Activated naive CD4-positive, alpha-beta T cell treated with anti-CD3 and anti-CD28 coated beads for 36 hours (primary cell): ENCODE measurements at regions of chr11 and their contacts with region 1.

Region 1: GRCh38 chr11:125358254-125358840 is 137.7 kb downstream of the FEZ1 start:
- DNase-seq: no peak
- H3K4me3 Mint-ChIP-seq: no peak overlapping the region
- H3K27ac Mint-ChIP-seq: no peak overlapping the region
- H3K4me1 Mint-ChIP-seq: no peaks in the 10 kb centered on the region
- H3K27me3 Mint-ChIP-seq: no peaks in the 10 kb centered on the region

Region 2: GRCh38 chr11:124644426-124645280 is 713.7 kb before region 1 on chr11:
- CTCF ChIA-PET with region 1: no interaction called
- intact Hi-C with region 1: loop called (anchors 5 kb)
- DNase-seq: peak; percentile 26
- H3K4me3 Mint-ChIP-seq: no peak overlapping the region
- H3K27ac Mint-ChIP-seq: no peak overlapping the region
- H3K4me1 Mint-ChIP-seq: no peaks in the 10 kb centered on the region
- H3K27me3 Mint-ChIP-seq: no peaks in the 10 kb centered on the region

Region 3: DNA sequence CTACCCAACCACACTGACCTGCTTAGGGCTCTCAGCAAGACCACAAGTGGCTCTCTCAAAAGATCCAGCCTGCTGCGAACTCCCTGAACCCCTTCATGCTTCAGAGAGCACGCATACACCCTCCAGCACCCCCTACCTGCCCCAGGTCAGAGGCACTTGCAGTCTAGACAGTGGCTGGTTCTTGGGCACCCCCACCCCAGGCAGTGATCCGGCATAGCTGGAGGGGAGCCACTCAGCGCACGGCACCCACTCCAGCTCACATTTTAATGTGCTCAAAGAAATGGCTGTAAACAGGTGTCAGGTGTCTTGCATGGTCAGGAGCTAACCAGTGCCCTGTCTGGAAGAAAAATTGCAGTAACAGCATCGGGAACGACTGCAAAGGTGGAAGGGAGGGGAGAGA is 53.0 kb before region 1 on chr11:
- CTCF ChIA-PET with region 1: no interaction called
- intact Hi-C with region 1: no loop called
- DNase-seq: no peak
- H3K4me3 Mint-ChIP-seq: no peak overlapping the region
- H3K27ac Mint-ChIP-seq: no peak overlapping the region
- H3K4me1 Mint-ChIP-seq: no peaks in the 10 kb centered on the region
- H3K27me3 Mint-ChIP-seq: no peaks in the 10 kb centered on the region